HEK293T (cell line): ENCODE measurements at regions of chr19 and their contacts with region 1.

Region 1: GRCh38 chr19:34104096-34104495 is 68.2 kb upstream of the LSM14A start:
- DNase-seq: no peak

Region 2: GRCh38 chr19:34120846-34121639 is 16.9 kb after region 1 on chr19:
- CTCF ChIA-PET with region 1: interaction called, 11 read pairs
- POLR2A ChIA-PET with region 1: no interaction called
- DNase-seq: peak; percentile 61